ENCODE measurements at regions of chr17 and their contacts with region 1.

Region 1: GRCh38 chr17:18225121-18225566 is 291 bp upstream of the LLGL1 start:
- DNase-seq: peak; percentile 96 to 98 (median 97)
- H3K4me3 ChIP-seq: peak overlapping the region; percentile 34
- H3K27ac ChIP-seq: no peak overlapping the region
- H3K4me1 ChIP-seq: peaks cover 3% of the 10 kb centered on the region
- H3K27me3 ChIP-seq: no peaks in the 10 kb centered on the region
- CTCF ChIP-seq: no peak
- EP300 ChIP-seq: no peak
- POLR2A ChIP-seq: no peak

Region 2: GRCh38 chr17:18158022-18158600 is 67.0 kb before region 1 on chr17:
- intact Hi-C with region 1: loop called in 1 of 4 experiments (anchors 10 kb)
- DNase-seq: peak; percentile 94 to 97 (median 96)
- H3K4me3 ChIP-seq: peak overlapping the region; percentile 46
- H3K27ac ChIP-seq: peak overlapping the region; percentile 14 to 73
- H3K4me1 ChIP-seq: peaks cover 4% of the 10 kb centered on the region
- H3K27me3 ChIP-seq: no peaks in the 10 kb centered on the region
- CTCF ChIP-seq: no peak
- EP300 ChIP-seq: no peak
- POLR2A ChIP-seq: no peak

Region 3: GRCh38 chr17:18176176-18176575 is 49.0 kb before region 1 on chr17:
- intact Hi-C with region 1: no loop called
- DNase-seq: no peak
- H3K4me3 ChIP-seq: no peak overlapping the region
- H3K27ac ChIP-seq: no peak overlapping the region
- H3K4me1 ChIP-seq: no peaks in the 10 kb centered on the region
- H3K27me3 ChIP-seq: no peaks in the 10 kb centered on the region
- CTCF ChIP-seq: no peak
- EP300 ChIP-seq: no peak
- POLR2A ChIP-seq: no peak

Region 4: DNA sequence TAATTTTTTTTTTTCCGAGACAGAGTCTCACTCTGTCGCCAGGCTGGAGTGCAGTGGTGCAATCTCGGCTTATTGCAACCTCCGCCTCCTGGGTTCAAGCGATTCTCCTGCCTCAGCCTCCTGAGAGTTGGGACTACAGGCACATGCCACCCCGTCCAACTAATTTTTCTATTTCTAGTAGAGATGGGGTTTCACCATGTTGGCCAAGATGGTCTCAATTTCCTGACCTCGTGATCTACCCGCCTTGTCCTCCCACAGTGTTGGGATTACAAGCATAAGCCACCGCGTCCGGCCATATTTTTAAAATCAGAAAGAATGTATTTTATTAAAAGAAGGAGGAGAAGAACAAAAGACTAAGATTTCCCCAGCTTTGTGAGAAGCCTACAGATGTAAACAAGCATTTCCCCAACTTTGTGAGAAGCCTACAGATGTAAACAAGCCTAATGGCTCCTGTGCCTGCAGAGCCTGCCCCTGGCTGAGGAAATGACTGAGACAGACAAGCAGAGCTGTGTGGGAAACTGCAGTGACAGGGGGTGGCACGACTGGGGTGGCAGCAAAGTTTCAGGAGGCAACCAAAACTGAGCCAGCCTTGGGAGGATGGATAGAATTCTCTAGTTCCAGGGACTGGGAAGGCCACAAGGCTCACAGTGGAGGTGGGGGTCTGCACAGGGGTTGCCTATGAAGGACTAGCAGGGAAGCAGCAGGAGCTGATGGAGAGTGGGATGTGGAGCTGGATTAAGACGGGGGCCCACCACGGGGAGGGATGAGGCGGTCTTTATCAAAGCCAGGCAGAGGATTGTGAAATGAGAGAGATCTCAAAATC is 66.8 kb after region 1 on chr17:
- intact Hi-C with region 1: no loop called
- DNase-seq: no peak
- H3K4me3 ChIP-seq: no peak overlapping the region
- H3K27ac ChIP-seq: no peak overlapping the region
- H3K4me1 ChIP-seq: no peaks in the 10 kb centered on the region
- H3K27me3 ChIP-seq: no peaks in the 10 kb centered on the region
- CTCF ChIP-seq: no peak
- EP300 ChIP-seq: no peak
- POLR2A ChIP-seq: no peak

Measured in ovary (tissue), 10 donors.